ENCODE measurements at regions of chrX and their contacts with region 1.

Region 1: GRCh38 chrX:41781502-41781901 is 57.5 kb downstream of the GPR82 start:
- DNase-seq: no peak
- H3K4me3 ChIP-seq: no peak overlapping the region
- H3K27ac ChIP-seq: no peak overlapping the region
- H3K4me1 ChIP-seq: peaks cover 0 to 7% (median 0%) of the 10 kb centered on the region in 6 donors
- H3K27me3 ChIP-seq: no peaks in the 10 kb centered on the region
- CTCF ChIP-seq: peak; percentile 11 to 65 (median 58)
- POLR2A ChIP-seq: no peak

Region 2: DNA sequence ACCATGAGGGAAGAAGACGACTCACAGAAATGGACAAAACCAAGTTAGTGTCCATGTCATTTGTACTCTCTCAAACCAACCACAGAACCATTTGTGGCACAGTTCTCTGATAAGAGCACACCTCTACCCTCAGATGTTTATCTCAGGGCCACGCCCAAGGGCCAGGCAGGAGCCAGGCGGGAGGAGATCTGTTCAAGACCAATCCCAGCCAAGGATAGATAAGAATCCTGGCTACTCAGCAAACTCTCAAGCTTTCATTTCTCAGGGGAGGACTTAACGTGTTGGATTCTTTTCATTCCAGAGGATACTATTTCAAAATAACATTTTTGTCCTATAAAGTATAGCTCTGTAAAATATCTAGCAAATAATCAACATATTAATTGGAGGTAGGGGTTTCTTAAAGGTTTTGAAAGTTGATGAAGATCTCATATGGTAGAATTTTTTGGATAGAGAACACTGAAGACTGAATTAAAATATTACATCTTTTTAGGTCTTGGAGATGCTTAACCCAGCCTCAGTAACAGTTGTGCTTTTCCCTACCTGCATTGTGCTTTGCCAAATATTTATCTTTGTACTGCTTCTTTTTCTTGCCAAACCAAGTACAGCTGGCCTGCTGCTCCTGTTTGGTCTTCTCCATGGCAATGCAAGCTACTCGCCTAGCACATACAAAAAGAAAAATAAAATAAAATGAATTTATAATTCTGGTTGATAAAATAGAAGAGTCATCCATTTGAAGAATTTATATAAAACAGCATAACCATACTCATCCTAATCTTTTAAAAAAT is 239.2 kb before region 1 on chrX:
- intact Hi-C with region 1: no loop called
- DNase-seq: no peak
- H3K4me3 ChIP-seq: no peak overlapping the region
- H3K27ac ChIP-seq: no peak overlapping the region
- H3K4me1 ChIP-seq: no peaks in the 10 kb centered on the region
- H3K27me3 ChIP-seq: no peaks in the 10 kb centered on the region
- CTCF ChIP-seq: no peak
- POLR2A ChIP-seq: no peak

Region 3: DNA sequence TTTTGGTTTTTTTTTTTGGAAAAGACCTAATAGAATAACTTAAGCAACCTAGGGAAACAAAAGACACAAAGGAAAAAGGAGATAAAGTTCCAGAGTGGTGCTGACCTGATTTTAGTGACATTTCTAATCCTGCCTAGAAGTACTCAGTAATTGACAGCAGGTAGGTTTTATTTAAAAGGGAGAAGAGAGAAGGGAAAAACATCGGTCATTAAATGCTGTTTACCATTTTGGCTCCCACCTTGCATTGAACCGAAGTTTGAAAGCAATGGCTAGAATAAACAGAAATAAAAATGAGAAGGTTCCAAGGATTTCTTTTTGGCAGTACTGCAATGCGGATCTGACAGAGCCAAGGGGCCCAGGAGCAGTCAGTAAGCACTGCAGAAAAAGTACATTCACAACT is 1758.8 kb after region 1 on chrX:
- intact Hi-C with region 1: loop called (anchors 10 kb)
- DNase-seq: no peak
- H3K4me3 ChIP-seq: no peak overlapping the region
- H3K27ac ChIP-seq: no peak overlapping the region
- H3K4me1 ChIP-seq: no peaks in the 10 kb centered on the region
- H3K27me3 ChIP-seq: no peaks in the 10 kb centered on the region
- CTCF ChIP-seq: no peak
- POLR2A ChIP-seq: no peak

Region 4: DNA sequence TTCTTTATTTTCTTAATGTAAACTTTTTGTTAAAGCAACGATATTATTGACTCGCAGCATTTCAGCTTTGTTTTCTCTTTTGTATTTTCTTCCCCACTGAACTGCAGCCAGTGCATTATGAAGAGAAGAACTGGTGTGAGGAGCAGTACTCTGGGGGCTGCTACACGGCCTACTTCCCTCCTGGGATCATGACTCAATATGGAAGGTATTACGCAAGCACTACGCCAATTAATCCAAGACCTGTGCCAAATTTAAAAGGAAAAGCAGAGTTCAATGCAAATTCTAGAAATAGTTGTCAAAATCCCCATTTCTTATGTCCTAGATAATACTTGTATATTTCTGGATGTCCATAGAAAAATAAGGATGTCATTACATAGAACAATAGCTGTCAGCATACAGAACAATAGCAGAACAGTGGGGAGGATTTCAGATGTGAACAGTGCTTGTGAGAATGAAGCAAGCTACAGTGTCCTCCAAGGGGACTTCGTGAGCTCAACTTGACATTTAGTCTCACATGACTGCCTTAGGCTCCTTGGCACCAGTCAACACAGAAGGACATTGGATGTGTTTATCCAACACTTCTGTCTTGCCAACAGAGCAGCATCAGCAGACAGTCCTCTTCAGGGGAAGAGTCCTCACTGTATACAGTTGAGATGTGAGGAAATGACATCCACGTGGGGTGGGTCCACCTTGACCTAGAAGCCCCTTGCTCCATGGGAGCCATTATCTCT is 1960.5 kb after region 1 on chrX:
- intact Hi-C with region 1: loop called (anchors 10 kb)
- DNase-seq: no peak
- H3K4me3 ChIP-seq: no peak overlapping the region
- H3K27ac ChIP-seq: no peak overlapping the region
- H3K4me1 ChIP-seq: no peaks in the 10 kb centered on the region
- H3K27me3 ChIP-seq: no peaks in the 10 kb centered on the region
- CTCF ChIP-seq: no peak
- POLR2A ChIP-seq: no peak